Posterior vena cava (tissue), 2 donors: ENCODE measurements at regions of chr1 and their contacts with region 1.

Region 1: GRCh38 chr1:41268154-41268770 is 26.2 kb upstream of the SCMH1 start:
- DNase-seq: peak; percentile 94

Region 2: GRCh38 chr1:39926343-39926793 is 1341.9 kb before region 1 on chr1:
- intact Hi-C with region 1: loop called in 1 of 2 experiments (anchors 10 kb)
- DNase-seq: no peak

Region 3: DNA sequence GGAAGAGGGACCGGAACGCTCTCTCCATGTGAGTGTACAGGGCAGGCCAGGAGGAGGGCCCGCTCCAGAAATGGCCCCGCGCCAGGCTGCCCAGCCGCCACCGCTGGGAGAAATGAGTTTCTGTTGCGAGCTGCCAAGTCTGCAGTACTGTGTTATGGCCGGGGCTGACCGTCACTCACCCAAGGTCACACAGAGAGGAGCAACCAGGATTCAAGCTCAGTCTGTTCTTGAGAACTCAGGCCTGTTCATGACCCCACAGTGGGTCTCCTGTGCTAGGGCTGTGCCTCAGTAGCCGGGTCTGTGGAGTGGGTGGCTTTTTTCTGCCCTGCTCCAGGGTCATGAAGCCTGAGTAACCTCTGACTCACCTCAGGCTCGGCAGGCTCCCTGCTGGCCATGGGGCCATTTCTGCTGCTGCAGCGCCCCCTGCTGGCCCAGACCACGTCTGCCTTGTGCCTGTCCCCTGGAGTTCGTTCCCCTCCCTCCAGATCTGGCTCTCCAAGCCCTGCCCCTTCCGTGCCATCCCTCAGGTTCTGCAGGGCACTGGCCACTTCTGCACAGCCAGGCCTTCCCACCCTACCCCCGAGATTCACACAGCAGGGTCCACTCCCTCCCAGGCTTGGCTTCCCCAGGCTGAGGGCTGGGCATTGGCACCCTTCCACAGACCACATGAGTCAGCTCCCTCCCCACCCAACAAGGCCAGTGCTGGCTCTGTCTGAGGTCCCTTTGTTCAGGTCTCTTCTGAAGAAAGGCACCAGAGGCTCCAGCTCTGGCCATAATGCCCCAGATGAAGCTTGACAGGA is 164.4 kb after region 1 on chr1:
- intact Hi-C with region 1: loop called in 1 of 2 experiments (anchors 5 kb)
- DNase-seq: peak; percentile 97